H1 (cell line): ENCODE measurements at regions of chr5 and their contacts with region 1.

Region 1: DNA sequence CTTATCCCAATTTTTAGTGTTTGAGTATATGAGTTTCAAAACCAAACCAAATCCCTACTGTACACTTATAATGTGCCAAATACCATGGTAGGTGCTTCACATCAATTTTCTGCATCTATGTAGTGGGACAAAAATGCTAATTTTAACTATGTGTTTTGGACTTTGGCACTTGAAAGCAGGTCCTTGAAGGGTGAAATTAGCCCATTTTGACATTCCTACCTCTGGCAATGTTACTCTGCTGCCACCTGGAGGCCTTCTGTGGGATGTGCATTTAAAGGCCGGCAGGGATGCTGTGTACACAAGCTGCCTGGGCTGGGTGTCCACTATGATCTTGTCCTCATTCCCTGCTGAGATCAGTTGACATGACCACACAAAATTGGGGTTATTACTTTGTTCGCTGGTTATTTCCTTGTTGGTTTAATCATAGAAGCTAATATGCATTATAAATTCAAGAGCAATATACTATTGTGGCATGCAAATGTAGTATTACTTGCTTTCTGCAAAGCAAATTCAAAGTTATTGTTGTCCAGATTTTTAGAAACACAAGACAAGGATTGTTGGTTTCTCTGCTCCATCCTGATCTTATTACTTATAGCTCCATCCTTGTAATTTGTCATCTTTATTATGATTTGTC is 166.8 kb downstream of the ARHGEF28 start:
- DNase-seq: peak; percentile 46 to 86
- H3K4me3 ChIP-seq: no peak overlapping the region
- H3K27ac ChIP-seq: no peak overlapping the region
- H3K4me1 ChIP-seq: peaks cover 0 to 5% (median 0%) of the 10 kb centered on the region in 4 experiments; a peak in 1 of 7 replicates
- H3K27me3 ChIP-seq: peaks cover 0 to 1% (median 0%) of the 10 kb centered on the region in 4 experiments; a peak in 1 of 7 replicates
- CTCF ChIP-seq: peak; percentile 88 to 96 (median 96)
- EP300 ChIP-seq: no peak
- POLR2A ChIP-seq: no peak
- RAD21 ChIP-seq: peak; percentile 98

Region 2: DNA sequence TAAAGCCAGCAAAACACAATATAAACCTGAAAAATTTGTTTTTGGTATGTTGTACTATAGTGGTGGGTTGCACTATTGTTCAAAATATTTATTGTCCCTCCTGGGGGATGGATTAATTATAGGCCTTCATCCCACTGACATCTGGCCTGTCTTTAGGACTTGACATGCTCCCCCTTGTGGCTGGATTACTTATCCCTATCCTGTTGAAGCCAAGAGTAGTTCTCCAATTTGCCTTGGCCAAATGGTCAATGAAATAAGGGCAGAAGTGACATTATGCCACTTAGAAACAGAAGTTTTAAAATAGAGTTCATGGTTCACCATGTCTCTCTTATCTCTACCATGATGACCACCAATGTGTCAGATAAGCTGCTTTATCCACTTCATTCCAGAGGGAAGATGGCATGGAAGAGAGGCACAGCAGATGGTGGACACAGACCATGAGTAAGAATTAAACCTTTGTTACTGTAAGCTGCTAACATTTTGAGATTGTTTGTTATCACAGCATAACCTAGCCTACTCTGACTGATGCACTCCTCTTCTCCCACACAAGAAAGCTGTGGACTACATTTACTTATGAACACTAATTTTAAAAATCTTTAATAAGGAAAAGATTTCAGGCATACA is 196.0 kb before region 1 on chr5:
- CTCF ChIA-PET with region 1: interaction called, 254 read pairs
- POLR2A ChIA-PET with region 1: no interaction called
- DNase-seq: peak in 1 of 2 experiments; percentile 57
- H3K4me3 ChIP-seq: no peak overlapping the region
- H3K27ac ChIP-seq: no peak overlapping the region
- H3K4me1 ChIP-seq: no peaks in the 10 kb centered on the region
- H3K27me3 ChIP-seq: no peaks in the 10 kb centered on the region
- CTCF ChIP-seq: peak; percentile 8 to 81 (median 57)
- EP300 ChIP-seq: no peak
- POLR2A ChIP-seq: no peak
- RAD21 ChIP-seq: peak; percentile 45 to 62

Region 3: GRCh38 chr5:73812962-73813588 is 20.3 kb after region 1 on chr5:
- CTCF ChIA-PET with region 1: interaction called, 10 read pairs
- POLR2A ChIA-PET with region 1: no interaction called
- DNase-seq: no peak
- H3K4me3 ChIP-seq: no peak overlapping the region
- H3K27ac ChIP-seq: no peak overlapping the region
- H3K4me1 ChIP-seq: 0 out of 7 replicates have a peak, but pooled peaks cover 0 to 2% (median 0%) of the 10 kb centered on the region in 4 experiments
- H3K27me3 ChIP-seq: no peaks in the 10 kb centered on the region
- CTCF ChIP-seq: no peak
- EP300 ChIP-seq: no peak
- POLR2A ChIP-seq: no peak
- RAD21 ChIP-seq: no peak